OCI-LY7 (cell line): ENCODE measurements at regions of chr14 and their contacts with region 1.

Region 1: DNA sequence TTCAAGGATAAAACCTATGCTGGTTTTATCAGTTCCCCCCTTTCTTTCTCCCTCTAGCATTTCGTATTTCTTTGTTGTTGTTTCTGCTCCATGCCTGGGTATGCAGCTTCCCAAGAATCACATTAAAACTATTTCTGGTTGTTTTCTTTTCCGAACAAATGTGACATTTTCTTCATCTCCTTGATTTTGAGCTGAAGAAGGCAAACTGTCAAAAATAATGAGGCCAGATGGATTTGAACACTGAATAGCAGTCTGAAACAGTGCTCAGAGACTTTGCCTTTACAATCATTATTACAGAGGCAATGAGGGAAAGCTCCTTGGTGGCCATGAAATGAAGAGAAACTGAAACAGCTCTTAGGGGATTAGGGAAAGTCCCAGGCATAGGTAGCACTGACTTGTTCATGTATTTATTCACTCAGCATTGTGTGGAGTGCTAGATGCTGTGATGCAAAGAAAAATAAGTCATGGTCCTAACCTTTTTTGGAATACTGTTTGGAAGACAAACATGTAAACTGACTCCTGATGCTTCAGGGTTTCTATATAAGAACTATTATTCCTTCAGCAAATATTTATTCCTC is 319.5 kb downstream of the FUT8 start:
- DNase-seq: no peak
- H3K4me3 ChIP-seq: no peak overlapping the region
- H3K27ac ChIP-seq: no peak overlapping the region
- H3K4me1 ChIP-seq: no peaks in the 10 kb centered on the region
- CTCF ChIP-seq: no peak

Region 2: DNA sequence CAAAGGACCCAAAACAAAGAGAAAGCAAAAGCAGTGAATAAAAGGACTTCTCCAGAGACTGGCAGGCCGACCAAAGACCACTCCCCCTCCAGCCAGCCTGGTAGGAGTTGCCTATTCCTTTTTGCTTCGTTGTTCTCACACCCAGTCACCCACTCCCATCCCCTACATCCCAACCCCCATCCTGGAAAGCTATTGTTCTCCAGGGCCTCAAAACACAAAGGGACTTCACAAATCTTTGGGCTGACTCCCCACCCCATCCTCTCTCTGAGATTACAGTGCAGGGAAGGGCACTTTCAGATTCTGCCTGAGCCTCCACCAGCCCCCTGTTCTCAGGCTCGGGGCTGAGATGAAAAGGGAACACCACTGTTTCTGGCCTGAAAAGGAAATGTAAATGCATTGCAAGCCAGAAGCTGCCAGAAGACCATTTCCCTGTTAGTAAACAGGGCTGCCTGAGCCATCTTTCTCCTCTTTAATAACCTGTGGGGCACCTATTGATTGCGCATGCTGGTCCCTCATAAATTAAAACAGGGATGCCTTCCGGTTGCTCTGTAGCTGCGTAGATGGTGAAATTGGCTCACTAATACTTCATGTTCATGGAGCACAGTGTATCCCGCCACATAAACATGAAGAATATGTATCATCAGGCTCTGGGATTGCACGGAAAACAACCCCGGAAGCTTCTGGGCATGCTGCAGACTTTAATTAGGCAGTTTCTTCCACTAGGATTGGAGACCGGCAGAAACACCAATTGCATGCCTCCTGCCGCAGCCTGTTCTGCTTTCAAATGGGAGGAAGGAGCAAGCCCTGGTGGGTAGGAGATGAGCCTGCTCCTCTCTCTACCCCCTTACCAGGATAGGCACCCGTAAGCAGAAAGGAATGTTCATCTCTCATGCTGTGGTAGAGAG is 449.8 kb before region 1 on chr14:
- CTCF ChIA-PET with region 1: no interaction called
- POLR2A ChIA-PET with region 1: no interaction called
- intact Hi-C with region 1: loop called (anchors 10 kb)
- DNase-seq: peak; percentile 58
- H3K4me3 ChIP-seq: peak overlapping the region; percentile 34
- H3K27ac ChIP-seq: peak overlapping the region; percentile 51
- H3K4me1 ChIP-seq: peaks cover 55% of the 10 kb centered on the region
- CTCF ChIP-seq: no peak